ENCODE measurements at regions of chr11 and their contacts with region 1.

Region 1: GRCh38 chr11:120682866-120683265 is 171.3 kb downstream of the GRIK4 start:
- DNase-seq: no peak
- ATAC-seq: no peak
- H3K4me3 ChIP-seq: no peak overlapping the region
- H3K27ac ChIP-seq: no peak overlapping the region
- H3K4me1 ChIP-seq: no peaks in the 10 kb centered on the region
- H3K27me3 ChIP-seq: peaks cover 0 to 58% (median 8%) of the 10 kb centered on the region in 9 donors
- CTCF ChIP-seq: no peak
- POLR2A ChIP-seq: no peak

Region 2: DNA sequence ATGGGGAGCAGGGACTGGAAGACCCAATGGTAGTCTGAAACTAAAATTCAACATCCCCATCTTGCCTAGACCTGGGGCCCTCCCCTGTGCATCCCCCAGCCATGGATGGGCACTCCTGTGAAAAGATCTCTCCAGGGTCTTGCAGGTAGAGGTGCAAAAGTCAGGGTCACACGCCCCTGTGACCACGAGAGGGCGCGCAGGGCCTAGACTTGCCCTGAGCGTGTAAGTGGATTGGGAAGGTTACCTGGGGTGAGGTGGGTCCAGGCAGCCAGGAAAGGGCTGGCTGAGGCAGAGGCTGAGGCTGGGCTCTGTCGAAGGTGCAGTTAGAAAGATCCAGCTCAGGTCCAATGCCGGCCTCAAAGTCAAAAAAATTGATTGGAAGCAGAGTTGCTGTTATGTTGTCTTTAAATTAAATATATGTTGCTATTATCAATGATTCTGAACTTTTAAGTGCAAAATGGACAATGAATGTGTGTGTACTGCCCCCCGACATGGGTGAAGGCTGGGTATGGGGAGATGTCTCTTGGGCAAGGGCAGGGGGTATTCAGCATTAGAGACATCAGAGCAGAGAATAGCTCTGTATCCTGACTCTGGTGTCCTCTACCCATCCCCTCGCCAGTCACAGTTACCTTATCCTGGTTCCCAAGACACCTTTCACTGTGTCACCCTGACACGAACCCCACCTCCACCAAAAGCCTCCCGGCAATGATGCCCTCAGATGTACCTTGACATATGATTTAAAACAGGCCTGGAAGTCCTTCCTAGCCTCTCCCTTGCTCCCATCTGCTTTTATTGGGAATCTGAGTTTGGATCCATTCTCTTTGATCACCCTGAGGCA is 447.6 kb before region 1 on chr11:
- intact Hi-C with region 1: loop called in 1 of 10 experiments (anchors 10 kb)
- DNase-seq: peak in 4 of 5 donors; percentile 50 to 71 (median 60)
- ATAC-seq: peak; percentile 51 to 82 (median 72)
- H3K4me3 ChIP-seq: no peak overlapping the region
- H3K27ac ChIP-seq: no peak overlapping the region
- H3K4me1 ChIP-seq: peaks cover 0 to 14% (median 0%) of the 10 kb centered on the region in 12 donors
- H3K27me3 ChIP-seq: peaks cover 4 to 38% (median 17%) of the 10 kb centered on the region in 9 donors
- CTCF ChIP-seq: peak; percentile 54 to 78 (median 72)
- POLR2A ChIP-seq: no peak

Region 3: GRCh38 chr11:120316842-120317688 is 365.8 kb before region 1 on chr11:
- intact Hi-C with region 1: loop called in 2 of 10 experiments (anchors 10 kb)
- DNase-seq: peak; percentile 69 to 83 (median 75)
- ATAC-seq: peak; percentile 68 to 89 (median 84)
- H3K4me3 ChIP-seq: no peak overlapping the region
- H3K27ac ChIP-seq: peak overlapping the region in 11 of 12 donors; percentile 21 to 69 (median 61)
- H3K4me1 ChIP-seq: peaks cover 0 to 33% (median 16%) of the 10 kb centered on the region in 12 donors
- H3K27me3 ChIP-seq: peaks cover 0 to 3% (median 0%) of the 10 kb centered on the region in 9 donors
- CTCF ChIP-seq: no peak
- POLR2A ChIP-seq: no peak

Region 4: DNA sequence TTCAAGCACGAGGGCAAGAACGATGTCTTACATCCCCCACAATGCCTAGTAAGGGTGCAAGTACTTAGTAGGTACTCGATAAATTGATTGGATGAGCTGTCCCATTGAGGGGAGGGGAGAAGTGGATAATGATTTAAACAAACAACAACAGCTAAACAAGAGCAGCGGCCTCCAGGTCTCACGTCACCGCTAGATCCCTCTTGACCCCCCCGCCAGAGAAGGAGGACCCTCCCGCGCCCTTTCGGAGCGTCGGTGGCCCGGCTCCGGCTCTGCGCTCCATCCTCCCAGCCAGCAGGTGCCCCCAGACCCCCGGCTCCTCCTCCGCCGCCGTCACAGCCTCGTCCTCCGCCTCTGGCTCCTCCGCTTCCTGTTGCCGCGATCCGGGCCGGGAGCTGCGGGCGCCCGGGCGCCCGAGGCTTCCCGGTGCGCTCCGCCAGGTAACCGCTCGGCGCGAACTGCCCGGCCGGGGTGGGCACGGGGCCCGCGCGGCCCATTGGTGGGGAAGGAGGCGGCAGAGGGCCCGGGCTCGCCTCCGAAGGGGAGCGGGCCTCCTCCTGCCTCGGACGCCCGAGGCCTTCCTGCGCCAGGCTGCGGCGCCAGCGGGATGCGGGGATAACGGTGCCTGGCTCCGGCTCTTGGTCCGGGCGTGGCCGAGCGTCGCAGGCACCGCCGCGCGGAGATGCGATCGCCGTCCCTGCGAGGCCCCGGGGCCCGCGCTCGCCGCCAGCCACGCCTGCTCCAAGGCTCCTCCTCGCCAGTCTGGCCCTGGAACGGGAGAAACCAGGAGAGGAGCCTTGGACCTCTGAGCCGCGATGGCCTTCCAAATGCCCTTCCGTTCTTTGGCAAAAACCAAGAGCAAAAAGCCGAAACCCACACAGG is 357.7 kb before region 1 on chr11 and contains the start of gene TLCD5:
- intact Hi-C with region 1: loop called in 2 of 10 experiments (anchors 10 kb)
- DNase-seq: peak; percentile 76 to 84 (median 81)
- ATAC-seq: peak; percentile 33 to 82 (median 76)
- H3K4me3 ChIP-seq: peak within 1 kb of the TSS; percentile 63 to 97 (median 78)
- H3K27ac ChIP-seq: peak within 1 kb of the TSS; percentile 87 to 98 (median 94)
- H3K4me1 ChIP-seq: peaks cover 0 to 32% (median 20%) of the 10 kb centered on the region in 12 donors
- H3K27me3 ChIP-seq: peaks cover 0 to 42% (median 0%) of the 10 kb centered on the region in 9 donors
- CTCF ChIP-seq: peak in 4 of 12 donors; percentile 8 to 37 (median 28)
- POLR2A ChIP-seq: peak in 1 of 2 donors; percentile 85
- total RNA-seq, gene TLCD5: 9.4 to 15.0 (median 10.3) TPM

Region 5: DNA sequence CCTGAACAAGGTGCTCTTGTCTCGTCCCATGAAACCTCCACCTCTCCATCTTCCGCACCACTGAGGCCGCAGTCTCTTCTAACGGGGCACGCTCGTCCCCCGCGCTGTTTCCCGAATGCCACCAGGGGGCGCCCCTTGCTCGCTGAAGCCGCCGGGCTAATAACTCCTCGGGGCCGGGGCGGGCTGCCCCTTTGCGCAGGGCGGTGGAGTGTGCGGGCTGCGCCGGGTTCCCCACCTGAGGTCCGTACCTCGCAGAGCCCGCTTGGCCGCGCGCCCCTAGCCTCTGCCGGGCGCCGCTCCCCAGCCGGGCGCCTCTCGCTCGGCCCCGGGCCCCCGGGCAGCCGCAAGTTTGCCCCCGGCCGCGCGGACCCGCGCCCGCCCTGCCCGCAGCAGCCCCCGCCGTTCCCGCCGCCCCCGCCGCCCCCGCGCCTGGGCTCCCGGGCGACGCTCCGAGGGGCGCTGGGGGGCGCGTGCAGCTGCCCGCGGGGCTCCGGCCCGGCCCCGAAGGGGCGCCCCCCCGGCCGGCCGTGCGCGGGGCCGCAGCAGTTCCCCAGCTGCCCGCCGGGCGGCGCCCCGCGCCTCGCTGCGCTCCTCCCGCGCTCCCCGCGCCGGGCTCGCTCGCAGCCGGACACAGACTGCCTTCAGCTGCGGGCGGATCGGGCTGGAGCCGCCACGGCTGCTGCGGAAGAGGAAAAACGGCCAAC is 171.6 kb before region 1 on chr11 and contains the start of gene GRIK4:
- intact Hi-C with region 1: loop called (anchors 1 to 2 kb)
- DNase-seq: peak; percentile 77 to 91 (median 83)
- ATAC-seq: peak; percentile 53 to 94 (median 90)
- H3K4me3 ChIP-seq: peak within 1 kb of the TSS in 11 of 12 donors; percentile 18 to 62 (median 51)
- H3K27ac ChIP-seq: no peak within 1 kb of the TSS
- H3K4me1 ChIP-seq: peaks cover 0 to 7% (median 0%) of the 10 kb centered on the region in 12 donors
- H3K27me3 ChIP-seq: peaks cover 3 to 54% (median 12%) of the 10 kb centered on the region in 9 donors
- CTCF ChIP-seq: peak; percentile 88 to 95 (median 93)
- POLR2A ChIP-seq: no peak
- total RNA-seq, gene GRIK4: 0.07 to 0.45 (median 0.13) TPM in 4 of 9 donors, not detected in the others

Region 6: GRCh38 chr11:120945042-120945441 is 262.2 kb after region 1 on chr11:
- intact Hi-C with region 1: loop called in 8 of 10 experiments (anchors 5 to 10 kb)
- DNase-seq: no peak
- ATAC-seq: no peak
- H3K4me3 ChIP-seq: no peak overlapping the region
- H3K27ac ChIP-seq: no peak overlapping the region
- H3K4me1 ChIP-seq: no peaks in the 10 kb centered on the region
- H3K27me3 ChIP-seq: peaks cover 0 to 45% (median 5%) of the 10 kb centered on the region in 9 donors
- CTCF ChIP-seq: peak in 2 of 12 donors; percentile 11 to 15
- POLR2A ChIP-seq: no peak

Region 7: DNA sequence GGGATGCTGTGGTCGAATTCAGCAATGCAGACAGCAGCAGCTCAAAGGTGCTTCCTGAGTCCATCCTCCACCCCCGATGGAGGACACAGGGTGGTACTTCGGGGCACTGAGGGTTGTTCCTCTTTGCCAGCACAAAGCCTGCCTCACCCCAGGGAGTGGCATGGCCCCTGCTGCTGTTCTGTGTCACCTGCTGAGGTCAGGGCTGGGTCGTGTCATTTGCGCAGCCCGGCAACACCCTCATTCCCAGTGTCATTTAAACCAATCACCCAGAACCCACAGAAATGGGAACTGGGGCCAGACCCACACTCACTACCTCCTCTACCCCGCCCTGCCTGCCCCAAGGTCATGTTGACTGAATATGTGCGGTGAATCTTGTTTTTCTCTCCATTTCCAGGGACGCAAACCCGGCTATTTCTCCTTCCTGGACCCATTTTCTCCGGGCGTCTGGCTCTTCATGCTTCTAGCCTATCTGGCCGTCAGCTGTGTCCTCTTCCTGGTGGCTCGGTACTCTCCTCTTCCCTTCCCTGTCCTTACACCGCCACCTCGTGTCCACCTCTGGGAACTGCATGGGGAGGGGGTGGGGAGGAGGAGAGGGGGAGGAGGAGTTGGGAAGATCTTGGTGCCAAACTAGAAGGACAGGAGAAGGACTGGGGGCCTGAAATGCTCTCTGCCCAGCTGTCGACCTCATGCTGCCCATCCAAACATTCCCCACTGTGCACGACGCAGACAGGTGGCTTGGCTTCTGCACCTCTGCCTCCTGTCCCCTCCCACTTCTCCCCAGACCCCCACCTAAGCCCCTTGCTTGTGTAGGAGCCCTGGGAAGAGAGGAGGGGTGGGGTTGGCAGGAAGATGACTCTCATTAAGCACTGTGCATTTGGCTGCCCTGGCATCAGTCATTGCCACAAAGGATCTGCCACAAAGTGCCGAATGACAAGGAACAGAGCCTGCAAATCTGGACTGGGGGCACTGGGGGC is 269.9 kb after region 1 on chr11:
- intact Hi-C with region 1: loop called in 8 of 10 experiments (anchors 5 to 10 kb)
- DNase-seq: peak; percentile 70 to 89 (median 72)
- ATAC-seq: peak; percentile 75 to 96 (median 92)
- H3K4me3 ChIP-seq: peak overlapping the region in 6 of 12 donors; percentile 9 to 38 (median 26)
- H3K27ac ChIP-seq: peak overlapping the region in 3 of 12 donors; percentile 28 to 39 (median 38)
- H3K4me1 ChIP-seq: peaks cover 0 to 12% (median 3%) of the 10 kb centered on the region in 12 donors
- H3K27me3 ChIP-seq: peaks cover 0 to 20% (median 3%) of the 10 kb centered on the region in 9 donors
- CTCF ChIP-seq: peak; percentile 47 to 81 (median 68)
- POLR2A ChIP-seq: no peak